Activated CD4-positive, alpha-beta memory T cell treated with anti-CD3 and anti-CD28 coated beads, Interleukin-2, amount 10 ng/mL, durations not matched to agents 7 days and 5 days (primary cell): ENCODE measurements at regions of chr2 and their contacts with region 1.

Region 1: GRCh38 chr2:101205521-101205998 is 47.1 kb upstream of the CNOT11 start:
- DNase-seq: peak; percentile 62
- H3K4me3 Mint-ChIP-seq: peak overlapping the region; percentile 21
- H3K27ac Mint-ChIP-seq: peak overlapping the region; percentile 59
- H3K4me1 Mint-ChIP-seq: peaks cover 11% of the 10 kb centered on the region
- H3K27me3 Mint-ChIP-seq: peaks cover 2% of the 10 kb centered on the region

Region 2: GRCh38 chr2:101012706-101013181 is 192.8 kb before region 1 on chr2:
- CTCF ChIA-PET with region 1: interaction called, 28 read pairs
- POLR2A ChIA-PET with region 1: no interaction called
- DNase-seq: peak; percentile 25
- H3K4me3 Mint-ChIP-seq: no peak overlapping the region
- H3K27ac Mint-ChIP-seq: no peak overlapping the region
- H3K4me1 Mint-ChIP-seq: peaks cover 32% of the 10 kb centered on the region
- H3K27me3 Mint-ChIP-seq: no peaks in the 10 kb centered on the region

Region 3: DNA sequence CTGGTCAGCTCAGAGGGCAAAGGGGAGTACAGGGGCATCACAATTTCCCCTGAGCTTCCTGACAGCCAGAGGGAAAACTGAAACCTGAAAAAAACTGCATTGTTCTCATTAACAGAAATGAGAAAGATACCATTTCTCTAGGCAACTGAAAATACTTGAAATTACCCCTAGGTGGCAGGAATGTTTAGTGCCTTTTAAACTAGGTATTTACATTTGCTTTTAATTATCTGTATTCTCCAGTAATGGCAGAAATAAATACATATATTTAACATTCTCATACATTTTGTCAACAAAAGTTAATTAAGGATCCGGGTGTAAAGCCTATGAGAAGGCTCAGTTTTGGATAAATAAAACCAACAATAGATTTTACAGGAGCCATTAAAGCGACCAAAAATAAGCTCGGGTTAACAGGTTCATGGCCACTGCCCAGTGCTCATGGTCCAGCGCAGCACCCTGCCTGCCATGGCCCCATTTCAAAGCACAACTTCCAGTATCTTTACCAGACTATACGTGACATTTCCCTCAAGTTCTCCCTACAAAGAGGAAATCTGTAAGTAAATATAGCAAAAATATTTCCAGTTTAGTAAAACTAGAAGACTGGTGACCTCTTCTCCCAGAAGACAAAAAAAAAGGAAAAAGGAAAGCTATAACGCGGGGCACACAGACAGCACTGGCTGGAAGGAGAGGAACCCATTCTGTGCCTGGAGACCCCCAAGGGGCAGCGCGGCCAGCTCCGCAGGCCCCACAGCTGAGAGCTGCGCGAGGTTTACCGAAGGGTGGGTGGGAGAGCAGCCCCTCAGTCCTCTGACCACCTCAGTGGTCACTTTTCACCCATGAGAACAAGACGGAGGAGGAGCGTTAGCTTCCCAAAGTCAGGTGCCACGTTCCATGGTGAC is 168.8 kb before region 1 on chr2:
- CTCF ChIA-PET with region 1: interaction called, 13 read pairs
- POLR2A ChIA-PET with region 1: no interaction called
- DNase-seq: no peak
- H3K4me3 Mint-ChIP-seq: no peak overlapping the region
- H3K27ac Mint-ChIP-seq: no peak overlapping the region
- H3K4me1 Mint-ChIP-seq: no peaks in the 10 kb centered on the region
- H3K27me3 Mint-ChIP-seq: peaks cover 3% of the 10 kb centered on the region

Region 4: DNA sequence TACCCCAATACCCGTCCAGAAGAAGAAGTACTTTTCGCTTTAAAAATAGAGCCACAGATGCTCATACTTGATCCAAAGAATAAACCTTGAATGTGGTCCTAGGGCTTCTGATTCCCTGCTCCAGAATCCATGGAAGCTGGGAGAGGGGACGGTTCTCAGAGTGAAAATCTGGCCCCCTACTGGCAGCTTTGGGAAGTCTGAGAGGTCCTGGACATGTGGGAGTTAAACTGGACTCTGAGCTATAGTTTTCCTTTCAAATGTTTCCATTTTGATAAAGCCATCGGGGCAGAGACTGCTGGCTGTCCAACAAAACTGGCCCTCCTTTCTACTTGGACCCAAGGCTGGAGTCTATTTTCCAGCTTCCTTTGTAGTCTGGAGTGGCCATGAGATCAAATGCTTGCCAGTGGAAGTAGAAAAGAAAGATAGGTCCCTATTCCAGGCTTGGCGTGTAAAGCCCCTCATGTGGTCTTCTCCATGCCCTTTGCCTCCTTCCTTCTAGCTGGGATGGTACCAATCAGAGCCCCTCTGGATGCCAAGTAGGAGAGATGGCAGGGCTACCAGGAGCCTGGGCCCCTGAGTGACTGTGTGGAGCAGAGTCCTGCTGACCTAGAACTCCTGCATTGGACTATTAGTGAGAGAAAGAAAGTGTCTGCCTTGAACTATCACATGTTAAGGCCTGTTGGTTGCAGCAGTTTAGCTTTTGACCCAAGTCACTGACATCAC is 16.7 kb before region 1 on chr2:
- CTCF ChIA-PET with region 1: interaction called, 17 read pairs
- POLR2A ChIA-PET with region 1: interaction called, 3 read pairs
- DNase-seq: no peak
- H3K4me3 Mint-ChIP-seq: no peak overlapping the region
- H3K27ac Mint-ChIP-seq: no peak overlapping the region
- H3K4me1 Mint-ChIP-seq: no peaks in the 10 kb centered on the region
- H3K27me3 Mint-ChIP-seq: peaks cover 2% of the 10 kb centered on the region